A549 (cell line): ENCODE measurements at regions of chr1 and their contacts with region 1.

Region 1: DNA sequence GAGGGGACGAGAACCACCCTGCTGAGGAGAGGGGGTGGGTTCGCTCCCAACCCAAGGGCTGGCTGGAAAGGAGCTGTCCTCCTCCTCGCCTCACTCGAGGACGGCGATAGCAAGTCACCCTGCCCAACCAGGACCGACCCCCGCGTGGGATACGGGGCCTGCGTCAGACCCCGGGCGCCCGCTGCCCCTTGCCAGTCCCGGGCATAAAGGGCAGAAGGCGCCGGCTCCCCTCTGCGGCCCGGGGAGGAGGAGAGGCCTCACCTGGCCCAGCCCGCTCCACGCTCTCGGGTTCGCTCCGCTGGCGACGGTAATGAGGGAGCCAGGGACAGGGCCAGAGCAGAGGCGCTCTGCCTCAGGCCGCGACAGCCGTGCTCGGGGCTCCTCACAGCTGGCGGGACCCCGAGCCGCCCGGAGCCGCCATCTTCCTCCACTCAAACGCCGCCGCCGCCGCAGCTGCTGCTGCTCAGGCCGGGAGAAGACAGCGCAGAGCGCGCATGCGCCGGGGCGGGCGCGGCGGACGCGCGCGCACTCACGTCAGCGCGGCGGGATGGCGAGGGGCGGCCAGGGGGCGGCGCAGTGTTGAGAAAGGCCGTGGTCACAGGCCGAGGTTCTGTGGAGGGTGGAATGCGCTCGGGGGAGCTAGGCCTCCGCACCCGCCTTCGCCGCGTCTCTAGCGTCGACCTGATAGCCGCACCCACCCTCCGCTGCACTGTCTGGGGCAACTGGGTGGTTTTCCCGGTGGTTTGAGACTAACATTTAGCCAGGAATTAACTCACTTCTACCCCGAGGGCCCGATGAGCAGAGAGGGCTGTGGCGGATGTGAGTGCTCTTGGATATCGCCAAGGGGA is at the start of gene FBXO42:
- DNase-seq: peak; percentile 68 to 87
- ATAC-seq: peak; percentile 93 to 94
- H3K4me3 ChIP-seq: peak within 1 kb of the TSS; percentile 82
- H3K27ac ChIP-seq: peak within 1 kb of the TSS; percentile 96 to 99
- H3K4me1 ChIP-seq: peaks cover 36% of the 10 kb centered on the region
- CTCF ChIP-seq: peak; percentile 28; the same call in 2 of the 3 replicates
- EP300 ChIP-seq: no peak
- POLR2A ChIP-seq: peak; percentile 78
- RAD21 ChIP-seq: 0 out of 5 replicates have a peak, but pooled peaks of 1 of the 2 experiments have one; percentile 11
- polyA plus RNA-seq, gene FBXO42: 12.4 and 14.0 TPM in 2 replicates

Region 2: GRCh38 chr1:16293538-16293937 is 58.7 kb before region 1 on chr1:
- CTCF ChIA-PET with region 1: no interaction called
- POLR2A ChIA-PET with region 1: no interaction called
- DNase-seq: no peak
- ATAC-seq: no peak
- H3K4me3 ChIP-seq: no peak overlapping the region
- H3K27ac ChIP-seq: no peak overlapping the region
- H3K4me1 ChIP-seq: no peaks in the 10 kb centered on the region
- CTCF ChIP-seq: no peak
- EP300 ChIP-seq: no peak
- POLR2A ChIP-seq: no peak
- RAD21 ChIP-seq: no peak

Region 3: DNA sequence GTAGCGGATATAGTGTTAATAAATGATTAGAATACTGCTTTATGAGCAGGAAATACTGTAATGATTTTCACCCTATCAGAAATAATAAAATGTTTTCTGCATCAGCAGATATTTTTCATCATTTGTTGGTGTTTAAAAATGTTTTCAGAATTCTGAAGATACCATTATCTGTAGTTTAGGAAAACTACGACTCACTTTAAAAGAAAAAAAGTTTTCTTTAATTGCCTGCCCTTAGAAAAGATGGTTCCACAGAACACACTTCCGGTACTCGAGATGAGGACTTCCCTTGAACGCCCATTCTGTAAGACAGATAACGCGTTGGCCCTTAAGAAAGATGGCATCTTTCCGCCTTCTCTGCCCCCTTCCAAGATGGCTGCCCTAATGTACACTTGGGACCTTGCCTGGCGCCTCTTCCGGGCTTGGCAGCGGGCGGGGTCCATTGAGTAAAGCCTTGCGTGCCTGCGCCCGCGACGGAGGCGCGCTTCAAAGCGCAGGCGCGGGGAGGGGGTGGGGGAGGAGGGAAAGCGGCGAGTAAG is 14.6 kb after region 1 on chr1 and contains the start of gene SZRD1:
- CTCF ChIA-PET with region 1: interaction called, 59 read pairs
- POLR2A ChIA-PET with region 1: interaction called, 5 read pairs
- DNase-seq: peak; percentile 78 to 99
- ATAC-seq: peak; percentile 88 to 91
- H3K4me3 ChIP-seq: peak within 1 kb of the TSS; percentile 71
- H3K27ac ChIP-seq: peak within 1 kb of the TSS; percentile 96 to 97
- H3K4me1 ChIP-seq: peaks cover 35% of the 10 kb centered on the region
- CTCF ChIP-seq: no peak
- EP300 ChIP-seq: no peak
- POLR2A ChIP-seq: no peak
- RAD21 ChIP-seq: no peak
- polyA plus RNA-seq, gene SZRD1: 56.8 and 62.9 TPM in 2 replicates